PC-3 (cell line): ENCODE measurements at regions of chr6 and their contacts with region 1.

Region 1: DNA sequence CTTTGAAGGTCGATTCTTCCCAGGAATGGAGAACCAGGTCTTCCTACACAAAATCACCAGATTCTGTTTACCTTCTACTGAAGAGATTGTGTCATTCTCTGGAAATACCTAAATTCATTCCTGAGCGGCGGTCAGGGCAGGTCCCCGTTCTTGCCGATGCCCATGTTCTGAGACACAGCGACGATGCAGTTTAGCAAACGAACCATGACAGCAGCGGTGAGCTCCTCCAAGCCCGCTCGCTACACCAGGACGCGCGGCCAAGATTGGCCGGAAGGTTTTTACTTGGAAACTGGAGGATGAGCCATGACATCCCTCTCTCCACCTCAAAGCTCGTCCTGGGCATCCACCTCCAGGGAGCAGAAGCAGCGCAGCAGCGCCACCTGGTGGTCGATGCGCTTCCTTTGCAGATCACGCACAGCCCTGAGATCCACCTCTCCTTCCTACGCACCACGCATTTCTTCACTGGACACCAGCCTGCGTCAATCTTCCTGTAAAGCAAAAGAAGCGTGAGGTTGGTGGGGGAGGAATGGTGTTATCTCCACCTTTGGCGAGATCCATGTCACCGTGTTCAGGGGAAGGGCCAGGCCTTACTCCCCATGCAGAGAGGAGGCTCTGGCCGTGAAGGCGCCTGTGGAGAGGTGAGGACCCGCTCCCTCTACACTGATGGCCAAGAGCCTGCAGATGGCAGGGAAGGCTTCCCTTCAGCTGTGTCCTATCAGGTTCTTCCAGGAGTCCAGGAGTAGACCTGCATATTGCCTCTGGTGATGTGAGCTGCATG is 9.9 kb upstream of the HLA-B start:
- DNase-seq: peak; percentile 96
- ATAC-seq: peak; percentile 99
- H3K4me3 ChIP-seq: peak overlapping the region; percentile 65
- H3K27ac ChIP-seq: no peak overlapping the region
- H3K4me1 ChIP-seq: peaks cover 8% of the 10 kb centered on the region; the same call in 1 of the 2 replicates
- H3K27me3 ChIP-seq: peaks cover 21% of the 10 kb centered on the region
- CTCF ChIP-seq: peak; percentile 94

Region 2: GRCh38 chr6:31139599-31139998 is 227.3 kb before region 1 on chr6:
- CTCF ChIA-PET with region 1: interaction called, 4 read pairs
- POLR2A ChIA-PET with region 1: interaction called, 5 read pairs
- intact Hi-C with region 1: loop called (anchors 2 kb)
- DNase-seq: peak; percentile 30
- ATAC-seq: no peak
- H3K4me3 ChIP-seq: no peak overlapping the region
- H3K27ac ChIP-seq: no peak overlapping the region
- H3K4me1 ChIP-seq: peaks cover 4% of the 10 kb centered on the region; the same call in 1 of the 2 replicates
- H3K27me3 ChIP-seq: no peaks in the 10 kb centered on the region
- CTCF ChIP-seq: no peak